Left ventricle myocardium superior (tissue), 1 donor: ENCODE measurements at regions of chr14 and their contacts with region 1.

Region 1: GRCh38 chr14:59055439-59056045 is 132.9 kb upstream of the DAAM1 start:
- DNase-seq: no peak
- ATAC-seq: peak; percentile 65

Region 2: DNA sequence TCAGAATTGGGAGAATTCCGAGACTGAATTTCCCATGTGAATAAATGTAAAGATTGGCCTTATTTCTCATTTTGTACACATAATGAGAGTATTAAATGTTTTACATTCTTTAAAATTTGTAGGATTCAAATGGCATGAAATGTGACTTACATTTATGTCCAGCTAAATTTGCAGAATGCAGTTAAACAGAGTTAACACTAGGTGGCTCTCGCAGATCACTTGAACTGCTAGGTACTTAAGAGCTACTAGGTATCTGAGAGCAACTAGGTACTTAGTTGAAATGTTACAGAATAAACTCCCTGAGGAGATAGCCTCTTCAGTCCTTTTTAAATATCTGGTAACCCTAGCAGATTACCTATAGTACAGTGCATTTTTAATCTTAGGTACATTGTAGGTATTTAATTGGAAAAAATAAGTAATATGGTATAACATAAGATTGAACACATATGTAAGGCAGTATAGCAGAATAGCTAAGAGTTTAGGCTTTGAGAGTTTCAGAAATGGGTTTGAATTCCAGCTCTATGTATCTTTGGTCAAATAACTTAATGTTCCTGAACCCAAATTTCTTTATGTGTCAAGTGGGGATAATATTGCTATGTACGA is 554.2 kb before region 1 on chr14:
- intact Hi-C with region 1: loop called (anchors 5 kb)
- DNase-seq: no peak
- ATAC-seq: peak; percentile 60

Region 3: GRCh38 chr14:58864751-58865513 is 190.6 kb before region 1 on chr14:
- intact Hi-C with region 1: no loop called
- DNase-seq: no peak
- ATAC-seq: peak; percentile 76

Region 4: DNA sequence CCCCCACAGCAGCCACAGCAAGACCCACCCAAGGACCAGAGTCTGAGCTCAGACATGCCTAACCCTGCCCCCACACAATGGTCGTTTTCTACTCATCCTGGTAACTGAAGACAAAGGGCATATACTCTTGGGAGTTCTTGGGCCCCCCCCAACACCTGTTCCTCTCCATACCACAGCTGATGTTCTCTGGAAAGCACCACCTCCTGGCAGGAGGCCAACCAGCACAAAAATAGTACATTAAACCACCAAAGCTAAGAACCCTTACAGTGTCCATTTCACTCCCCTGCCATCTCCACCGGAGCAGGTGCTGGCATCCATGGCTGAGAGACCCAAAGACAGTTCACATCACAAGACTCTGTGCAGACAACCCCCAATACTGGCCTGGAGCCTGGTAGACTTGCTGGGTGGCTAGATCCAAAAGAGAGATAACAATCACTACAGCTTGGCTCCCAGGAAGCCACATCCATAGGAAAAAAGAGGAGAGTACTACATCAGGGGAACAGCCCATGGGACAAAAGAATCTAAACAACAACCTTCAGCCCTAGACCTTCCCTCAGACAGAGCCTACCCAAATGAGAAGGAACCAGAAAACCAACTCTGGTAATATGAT is 52.4 kb after region 1 on chr14:
- intact Hi-C with region 1: no loop called
- DNase-seq: no peak
- ATAC-seq: no peak